Activated CD4-positive, alpha-beta T cell treated with anti-CD3 and anti-CD28 coated beads, Interleukin-2, amount 10 ng/mL, durations not matched to agents 24 days and 14 days (primary cell): ENCODE measurements at regions of chr21 and their contacts with region 1.

Region 1: GRCh38 chr21:31132574-31133242 is 94.4 kb upstream of the KRTAP19-8 start:
- DNase-seq: peak; percentile 94
- H3K4me3 Mint-ChIP-seq: peak overlapping the region; percentile 76
- H3K27ac Mint-ChIP-seq: peak overlapping the region; percentile 98
- H3K4me1 Mint-ChIP-seq: peaks cover 64% of the 10 kb centered on the region
- H3K27me3 Mint-ChIP-seq: no peaks in the 10 kb centered on the region

Region 2: DNA sequence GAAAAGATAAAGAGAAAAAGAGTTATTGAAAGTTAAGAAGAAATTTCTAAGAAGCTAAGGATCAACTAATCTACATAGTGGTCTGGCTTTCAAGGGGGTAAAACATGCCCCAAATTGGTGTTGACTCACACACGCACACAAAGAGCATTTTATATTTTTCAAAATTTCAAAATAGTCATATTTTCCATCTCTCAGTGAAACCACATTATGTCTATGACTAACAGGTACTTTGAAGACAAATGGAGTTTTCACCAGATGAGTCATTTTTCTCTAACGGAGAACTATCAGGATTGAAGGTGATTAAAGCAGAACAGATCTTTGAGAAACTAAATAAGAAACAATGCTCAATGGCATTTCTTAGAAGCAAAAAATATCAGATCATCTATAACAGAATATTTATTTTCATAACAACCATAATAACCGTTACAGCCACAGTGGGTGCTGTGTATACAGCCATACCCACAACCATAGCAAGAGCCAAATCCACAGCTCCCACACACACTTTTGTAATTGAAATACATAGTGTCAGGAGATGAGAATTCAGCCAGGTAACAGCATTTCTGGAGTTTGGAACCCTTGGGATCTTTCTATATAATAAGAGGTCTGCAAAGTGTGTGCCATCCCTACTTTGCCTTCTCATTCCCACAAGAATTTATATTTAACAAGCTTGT is 414.3 kb before region 1 on chr21 and contains the start of gene KRTAP21-3:
- intact Hi-C with region 1: loop called (anchors 2 kb)
- DNase-seq: peak; percentile 67
- H3K4me3 Mint-ChIP-seq: peak within 1 kb of the TSS; percentile 62
- H3K27ac Mint-ChIP-seq: peak within 1 kb of the TSS; percentile 68
- H3K4me1 Mint-ChIP-seq: peaks cover 31% of the 10 kb centered on the region
- H3K27me3 Mint-ChIP-seq: peaks cover 2% of the 10 kb centered on the region
- total RNA-seq, gene KRTAP21-3: not detected in 2 replicates

Region 3: GRCh38 chr21:31161157-31161556 is 28.4 kb after region 1 on chr21:
- intact Hi-C with region 1: loop called (anchors 1 kb)
- DNase-seq: no peak
- H3K4me3 Mint-ChIP-seq: no peak overlapping the region
- H3K27ac Mint-ChIP-seq: no peak overlapping the region
- H3K4me1 Mint-ChIP-seq: peaks cover 55% of the 10 kb centered on the region
- H3K27me3 Mint-ChIP-seq: no peaks in the 10 kb centered on the region

Region 4: DNA sequence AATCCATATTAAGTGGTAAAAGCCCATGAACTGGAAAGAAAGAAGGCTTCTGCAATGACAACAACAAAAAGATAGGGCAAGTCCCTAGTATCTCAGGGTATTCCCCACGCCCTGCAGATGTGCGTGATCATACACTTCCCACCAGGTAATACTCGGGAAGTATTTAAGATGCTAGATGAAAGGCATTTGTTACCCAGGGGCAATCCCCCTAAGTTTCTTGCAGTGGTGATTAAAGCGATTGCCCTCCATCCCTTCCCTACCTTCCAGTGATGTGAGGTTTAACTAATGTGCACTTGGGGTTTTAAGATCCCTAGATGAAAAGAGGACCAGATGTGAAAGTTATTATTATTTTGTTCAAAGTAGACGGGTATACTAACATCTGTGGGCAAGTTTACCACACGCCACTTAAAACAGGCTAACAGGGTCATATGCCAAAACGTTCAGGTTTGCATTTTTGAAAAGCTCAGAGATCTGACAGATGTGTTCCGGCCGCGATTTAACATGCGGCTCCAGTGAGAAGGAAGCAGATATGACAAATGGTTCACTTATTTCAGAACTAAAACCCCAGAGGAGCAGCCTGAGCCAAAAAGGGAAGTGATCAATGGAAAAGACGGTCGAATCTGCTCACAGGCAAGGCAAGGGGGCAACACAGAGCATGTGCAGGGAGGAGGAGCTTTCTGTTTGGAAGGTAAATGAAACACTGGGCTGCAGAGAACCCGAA is 194.0 kb after region 1 on chr21:
- intact Hi-C with region 1: loop called (anchors 1 kb)
- DNase-seq: peak; percentile 80
- H3K4me3 Mint-ChIP-seq: peak overlapping the region; percentile 74
- H3K27ac Mint-ChIP-seq: peak overlapping the region; percentile 92
- H3K4me1 Mint-ChIP-seq: peaks cover 28% of the 10 kb centered on the region
- H3K27me3 Mint-ChIP-seq: no peaks in the 10 kb centered on the region

Region 5: DNA sequence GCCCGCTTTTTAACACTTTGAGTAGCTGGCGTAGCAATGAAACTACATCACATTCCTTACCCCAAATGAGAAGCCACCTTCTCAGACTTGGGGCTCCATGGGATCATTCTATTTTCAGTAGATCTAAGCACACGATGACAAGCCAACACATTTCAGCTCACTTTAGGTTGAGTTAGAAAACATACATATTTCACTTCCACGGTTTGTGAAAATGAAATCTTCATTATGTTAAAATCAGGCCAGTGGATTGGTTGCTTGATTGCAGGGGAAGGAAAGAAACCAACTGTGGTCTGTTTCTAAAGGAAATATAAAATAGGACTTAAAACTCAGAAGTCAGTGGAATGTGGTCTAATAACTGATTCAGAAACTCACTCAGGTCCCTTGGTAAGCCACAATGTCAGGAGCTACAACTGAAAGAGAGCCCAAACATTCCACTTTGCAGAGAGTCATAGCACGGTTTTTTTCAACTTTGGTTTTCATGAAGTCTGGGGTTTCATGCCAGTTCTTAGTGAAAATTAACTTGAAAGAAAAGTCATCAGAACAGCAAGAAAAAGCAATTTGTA is 293.6 kb after region 1 on chr21:
- intact Hi-C with region 1: loop called (anchors 1 kb)
- DNase-seq: peak; percentile 67
- H3K4me3 Mint-ChIP-seq: peak overlapping the region; percentile 26
- H3K27ac Mint-ChIP-seq: peak overlapping the region; percentile 66
- H3K4me1 Mint-ChIP-seq: peaks cover 16% of the 10 kb centered on the region
- H3K27me3 Mint-ChIP-seq: peaks cover 7% of the 10 kb centered on the region